A549 (cell line): ENCODE measurements at regions of chr12 and their contacts with region 1.

Region 1: DNA sequence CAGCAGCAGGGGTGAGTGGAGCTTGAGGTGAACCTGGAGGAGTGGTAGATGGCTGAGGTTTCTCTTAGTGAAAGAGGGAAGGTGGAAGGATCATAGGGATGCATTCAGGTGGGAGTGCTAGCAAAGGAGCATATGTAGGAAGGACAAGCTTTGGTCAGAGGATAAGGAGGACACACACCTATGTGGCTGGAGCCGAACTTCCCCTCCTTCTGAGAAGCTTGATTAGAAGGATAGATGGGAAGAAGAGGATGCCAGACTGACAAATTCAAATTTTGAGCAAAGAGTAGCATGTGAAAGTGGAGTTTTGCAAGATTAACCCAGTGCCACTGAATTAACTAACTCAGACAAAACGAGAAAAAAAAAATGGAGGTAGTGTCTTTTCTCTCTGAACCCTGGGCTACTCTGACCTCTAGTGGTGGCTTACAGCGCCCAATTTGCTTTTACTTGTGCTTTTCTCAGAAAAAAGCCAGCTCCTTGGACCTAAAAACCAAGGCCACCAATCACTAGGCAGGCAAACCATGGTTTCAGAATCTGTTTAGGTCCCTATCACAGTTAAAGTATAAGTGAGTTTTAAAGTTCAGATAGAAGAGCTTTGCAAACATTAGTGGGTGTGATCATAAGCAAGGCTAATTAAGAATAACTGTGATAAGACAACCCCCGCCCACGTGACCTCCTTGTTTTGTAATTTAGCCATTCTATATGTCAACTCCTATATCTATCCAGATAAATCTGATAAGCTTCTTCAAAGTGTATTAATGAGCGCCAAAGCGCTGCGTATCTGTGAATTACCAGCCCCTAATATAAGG is 15.5 kb downstream of the EMP1 start:
- DNase-seq: peak; percentile 70 to 78
- ATAC-seq: peak; percentile 55 to 57; a peak in 5 of 6 replicates
- H3K4me3 ChIP-seq: no peak overlapping the region
- H3K27ac ChIP-seq: peak overlapping the region; percentile 71 to 83
- H3K4me1 ChIP-seq: peaks cover 41% of the 10 kb centered on the region
- CTCF ChIP-seq: peak; percentile 96
- EP300 ChIP-seq: no peak
- POLR2A ChIP-seq: no peak
- RAD21 ChIP-seq: peak; percentile 96 to 97

Region 2: GRCh38 chr12:12611512-12612306 is 600.4 kb before region 1 on chr12 and contains the start of gene CREBL2:
- CTCF ChIA-PET with region 1: no interaction called
- POLR2A ChIA-PET with region 1: no interaction called
- DNase-seq: peak; percentile 93 to 97
- ATAC-seq: peak; percentile 96
- H3K4me3 ChIP-seq: peak within 1 kb of the TSS; percentile 65
- H3K27ac ChIP-seq: peak within 1 kb of the TSS; percentile 89 to 91
- H3K4me1 ChIP-seq: peaks cover 38% of the 10 kb centered on the region
- CTCF ChIP-seq: no peak
- EP300 ChIP-seq: no peak
- POLR2A ChIP-seq: peak; percentile 41
- RAD21 ChIP-seq: no peak; a peak in 1 of 5 replicates
- polyA plus RNA-seq, gene CREBL2: 30.9 and 31.4 TPM in 2 replicates

Region 3: DNA sequence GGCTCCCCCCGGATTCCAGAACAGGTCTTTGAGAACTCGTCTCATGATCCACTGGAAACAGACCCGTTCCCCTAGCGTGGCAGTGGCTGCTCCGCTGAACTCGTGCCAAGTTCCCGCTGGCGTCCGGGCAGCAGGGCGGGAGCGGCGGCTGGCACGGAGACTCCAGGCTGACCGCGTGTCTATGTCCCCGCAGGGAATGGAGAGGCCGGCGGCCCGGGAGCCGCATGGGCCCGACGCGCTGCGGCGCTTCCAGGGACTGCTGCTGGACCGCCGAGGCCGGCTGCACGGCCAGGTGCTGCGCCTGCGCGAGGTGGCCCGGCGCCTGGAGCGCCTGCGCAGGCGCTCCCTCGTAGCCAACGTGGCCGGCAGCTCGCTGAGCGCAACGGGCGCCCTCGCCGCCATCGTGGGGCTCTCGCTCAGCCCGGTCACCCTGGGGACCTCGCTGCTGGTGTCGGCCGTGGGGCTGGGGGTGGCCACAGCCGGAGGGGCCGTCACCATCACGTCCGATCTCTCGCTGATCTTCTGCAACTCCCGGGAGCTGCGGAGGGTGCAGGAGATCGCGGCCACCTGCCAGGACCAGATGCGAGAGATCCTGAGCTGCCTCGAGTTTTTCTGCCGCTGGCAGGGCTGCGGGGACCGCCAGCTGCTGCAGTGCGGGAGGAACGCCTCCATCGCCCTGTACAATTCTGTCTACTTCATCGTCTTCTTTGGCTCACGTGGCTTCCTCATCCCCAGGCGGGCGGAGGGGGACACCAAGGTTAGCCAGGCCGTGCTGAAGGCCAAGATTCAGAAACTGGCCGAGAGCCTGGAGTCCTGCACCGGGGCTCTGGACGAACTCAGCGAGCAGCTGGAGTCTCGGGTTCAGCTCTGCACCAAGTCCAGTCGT is 425.1 kb before region 1 on chr12:
- CTCF ChIA-PET with region 1: interaction called, 16 read pairs
- POLR2A ChIA-PET with region 1: interaction called, 4 read pairs
- DNase-seq: peak; percentile 87 to 91
- ATAC-seq: peak; percentile 90 to 94
- H3K4me3 ChIP-seq: peak overlapping the region; percentile 44
- H3K27ac ChIP-seq: peak overlapping the region; percentile 85 to 94
- H3K4me1 ChIP-seq: peaks cover 35% of the 10 kb centered on the region
- CTCF ChIP-seq: no peak
- EP300 ChIP-seq: no peak
- POLR2A ChIP-seq: peak; percentile 89
- RAD21 ChIP-seq: no peak

Region 4: DNA sequence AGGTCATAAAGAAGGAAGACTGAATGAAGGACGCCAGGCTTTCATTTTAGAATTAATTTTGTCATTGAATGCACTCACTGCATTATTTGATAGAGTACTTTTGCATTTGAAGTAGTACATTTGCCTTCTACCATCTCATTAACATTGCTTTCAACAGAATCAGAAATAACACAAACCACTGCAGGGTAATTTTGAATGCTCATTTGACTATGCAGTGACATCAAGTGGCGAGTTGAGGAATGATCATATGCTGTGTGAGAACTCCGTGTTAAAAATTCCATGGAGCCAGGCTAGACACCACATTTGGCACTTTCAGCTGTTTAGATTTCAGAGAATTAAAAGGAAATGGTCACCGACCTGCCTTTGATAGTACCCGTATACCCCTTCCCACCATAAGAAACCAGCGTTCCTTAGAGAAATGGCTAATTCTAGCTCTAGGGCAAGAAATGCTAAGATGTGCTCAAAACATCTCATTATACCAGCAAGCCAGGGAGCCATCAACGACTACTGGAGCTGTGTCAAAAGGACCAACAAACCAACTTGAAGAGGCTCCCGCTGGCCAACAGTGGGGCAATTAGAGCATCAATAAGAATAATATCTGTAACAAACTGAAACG is 228.5 kb before region 1 on chr12:
- CTCF ChIA-PET with region 1: interaction called, 18 read pairs
- POLR2A ChIA-PET with region 1: no interaction called
- DNase-seq: peak; percentile 61 to 73
- ATAC-seq: peak; percentile 65 to 66; a peak in 5 of 6 replicates
- H3K4me3 ChIP-seq: no peak overlapping the region
- H3K27ac ChIP-seq: no peak overlapping the region
- H3K4me1 ChIP-seq: peaks cover 30% of the 10 kb centered on the region
- CTCF ChIP-seq: peak; percentile 86
- EP300 ChIP-seq: no peak
- POLR2A ChIP-seq: no peak
- RAD21 ChIP-seq: peak; percentile 84 to 91

Region 5: GRCh38 chr12:13023811-13024530 is 188.1 kb before region 1 on chr12:
- CTCF ChIA-PET with region 1: interaction called, 119 read pairs
- POLR2A ChIA-PET with region 1: no interaction called
- DNase-seq: peak; percentile 45 to 73
- ATAC-seq: peak; percentile 97 to 98
- H3K4me3 ChIP-seq: no peak overlapping the region
- H3K27ac ChIP-seq: no peak overlapping the region
- H3K4me1 ChIP-seq: no peaks in the 10 kb centered on the region
- CTCF ChIP-seq: peak; percentile 65
- EP300 ChIP-seq: no peak
- POLR2A ChIP-seq: no peak
- RAD21 ChIP-seq: peak; percentile 71 to 86

Region 6: GRCh38 chr12:13044002-13044905 is 167.8 kb before region 1 on chr12 and contains the start of gene FAM234B:
- CTCF ChIA-PET with region 1: interaction called, 23 read pairs
- POLR2A ChIA-PET with region 1: no interaction called
- DNase-seq: peak; percentile 74 to 88
- ATAC-seq: peak; percentile 97 to 99
- H3K4me3 ChIP-seq: peak within 1 kb of the TSS; percentile 97
- H3K27ac ChIP-seq: peak within 1 kb of the TSS; percentile 83 to 92
- H3K4me1 ChIP-seq: peaks cover 8% of the 10 kb centered on the region; the same call in 1 of the 3 replicates
- CTCF ChIP-seq: peak; percentile 28
- EP300 ChIP-seq: no peak
- POLR2A ChIP-seq: peak; percentile 86
- RAD21 ChIP-seq: no peak
- polyA plus RNA-seq, gene FAM234B: 7.4 and 7.5 TPM in 2 replicates

Region 7: DNA sequence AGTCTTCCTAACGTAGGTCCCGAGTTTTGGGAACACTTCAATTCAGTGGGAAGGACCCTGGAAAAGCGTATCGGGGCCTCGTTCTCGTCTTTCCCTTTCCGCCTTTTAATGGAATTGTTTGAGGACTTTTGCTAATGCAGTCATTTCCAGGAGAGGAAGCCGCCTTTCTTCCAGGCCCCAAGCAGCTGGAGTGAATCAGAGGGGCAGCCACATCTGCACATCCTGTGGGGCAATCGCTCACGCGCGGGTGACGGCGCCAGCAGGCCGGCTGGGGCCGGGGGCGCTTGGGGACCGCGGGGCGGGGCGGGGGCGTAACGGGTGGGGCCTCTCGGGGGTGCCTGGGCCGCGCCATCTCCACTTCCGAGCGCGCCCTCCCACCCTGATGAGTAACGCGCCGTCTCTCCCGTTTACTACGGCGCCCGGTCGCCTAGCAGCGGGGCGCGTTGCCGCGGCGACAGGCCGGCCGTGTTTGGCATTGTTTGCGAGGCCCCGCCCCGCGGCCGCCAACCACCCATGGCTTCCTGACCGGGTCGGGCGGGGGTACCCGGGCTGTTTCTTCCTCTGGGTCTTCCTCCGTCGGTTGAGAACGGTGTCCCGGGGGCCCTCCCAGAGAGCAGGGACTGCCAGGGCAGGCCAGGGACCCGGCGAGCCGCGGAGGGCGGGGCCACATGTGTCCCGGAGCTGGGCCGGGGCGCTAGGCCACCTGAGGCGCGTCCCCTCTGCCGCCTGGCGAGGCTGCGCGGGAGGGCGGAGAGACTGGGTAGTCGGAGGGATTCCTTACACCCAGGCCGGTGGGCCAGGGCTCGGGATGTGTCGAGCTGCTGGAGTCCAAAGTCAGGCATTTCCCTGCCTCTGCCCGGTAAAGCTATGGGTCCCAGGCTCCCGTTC is 110.9 kb before region 1 on chr12:
- CTCF ChIA-PET with region 1: interaction called, 189 read pairs
- POLR2A ChIA-PET with region 1: interaction called, 8 read pairs
- DNase-seq: peak; percentile 83 to 95
- ATAC-seq: peak; percentile 75 to 81
- H3K4me3 ChIP-seq: peak overlapping the region; percentile 52
- H3K27ac ChIP-seq: peak overlapping the region; percentile 95
- H3K4me1 ChIP-seq: peaks cover 57% of the 10 kb centered on the region
- CTCF ChIP-seq: no peak
- EP300 ChIP-seq: peak in 1 of 2 experiments; percentile 65; a peak in 1 of 5 replicates
- POLR2A ChIP-seq: peak; percentile 6; the same call in 1 of the 2 replicates
- RAD21 ChIP-seq: peak; percentile 7 to 35; a peak in 2 of 5 replicates

Region 8: DNA sequence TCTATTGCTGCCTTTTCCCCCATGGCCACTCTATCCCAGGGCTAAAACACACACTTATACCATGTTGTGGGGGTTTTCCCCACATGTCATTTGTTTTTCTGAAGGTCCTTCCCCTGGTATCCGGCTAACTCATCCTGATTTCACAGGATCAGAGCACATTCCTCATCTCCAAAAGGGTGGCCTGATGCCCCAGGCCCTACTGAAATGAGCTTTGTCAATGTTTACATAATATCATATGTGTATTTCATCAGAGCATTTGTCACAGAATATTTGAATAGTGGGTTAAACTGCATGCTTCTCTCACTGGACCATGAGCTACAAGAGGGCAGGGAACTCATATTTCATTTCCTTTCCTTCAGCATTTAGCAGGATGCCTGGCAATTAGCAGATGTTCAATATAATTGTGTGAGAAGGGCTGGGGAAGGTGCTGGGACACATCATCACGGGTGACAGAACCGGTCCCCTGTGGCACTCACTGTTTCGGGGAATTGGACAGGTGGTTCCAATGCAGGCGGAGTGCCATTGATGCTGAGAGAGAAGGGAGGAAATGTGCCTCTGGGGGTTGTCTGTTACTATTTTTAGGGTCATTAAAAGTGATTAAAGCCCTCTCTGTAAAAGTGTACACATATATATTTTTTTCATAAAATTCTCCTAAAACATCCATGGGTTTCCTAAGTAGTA is 11.3 kb after region 1 on chr12:
- CTCF ChIA-PET with region 1: interaction called, 145 read pairs
- POLR2A ChIA-PET with region 1: no interaction called
- DNase-seq: peak; percentile 76 to 86
- ATAC-seq: peak; percentile 81 to 87
- H3K4me3 ChIP-seq: no peak overlapping the region
- H3K27ac ChIP-seq: peak overlapping the region; percentile 66 to 69
- H3K4me1 ChIP-seq: peaks cover 31% of the 10 kb centered on the region
- CTCF ChIP-seq: no peak
- EP300 ChIP-seq: peak; percentile 59 to 66; a peak in 2 of 5 replicates
- POLR2A ChIP-seq: no peak
- RAD21 ChIP-seq: no peak

Region 9: GRCh38 chr12:15033641-15034040 is 1821.6 kb after region 1 on chr12:
- CTCF ChIA-PET with region 1: no interaction called
- POLR2A ChIA-PET with region 1: no interaction called
- DNase-seq: no peak
- ATAC-seq: no peak
- H3K4me3 ChIP-seq: no peak overlapping the region
- H3K27ac ChIP-seq: no peak overlapping the region
- H3K4me1 ChIP-seq: no peaks in the 10 kb centered on the region
- CTCF ChIP-seq: no peak
- EP300 ChIP-seq: no peak
- POLR2A ChIP-seq: no peak
- RAD21 ChIP-seq: no peak